ENCODE measurements at regions of chr5 and their contacts with region 1.

Region 1: DNA sequence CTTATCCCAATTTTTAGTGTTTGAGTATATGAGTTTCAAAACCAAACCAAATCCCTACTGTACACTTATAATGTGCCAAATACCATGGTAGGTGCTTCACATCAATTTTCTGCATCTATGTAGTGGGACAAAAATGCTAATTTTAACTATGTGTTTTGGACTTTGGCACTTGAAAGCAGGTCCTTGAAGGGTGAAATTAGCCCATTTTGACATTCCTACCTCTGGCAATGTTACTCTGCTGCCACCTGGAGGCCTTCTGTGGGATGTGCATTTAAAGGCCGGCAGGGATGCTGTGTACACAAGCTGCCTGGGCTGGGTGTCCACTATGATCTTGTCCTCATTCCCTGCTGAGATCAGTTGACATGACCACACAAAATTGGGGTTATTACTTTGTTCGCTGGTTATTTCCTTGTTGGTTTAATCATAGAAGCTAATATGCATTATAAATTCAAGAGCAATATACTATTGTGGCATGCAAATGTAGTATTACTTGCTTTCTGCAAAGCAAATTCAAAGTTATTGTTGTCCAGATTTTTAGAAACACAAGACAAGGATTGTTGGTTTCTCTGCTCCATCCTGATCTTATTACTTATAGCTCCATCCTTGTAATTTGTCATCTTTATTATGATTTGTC is 166.8 kb downstream of the ARHGEF28 start:
- DNase-seq: peak; percentile 59 to 85 (median 71)
- ATAC-seq: peak; percentile 83 to 85
- H3K4me3 ChIP-seq: no peak overlapping the region
- H3K27ac ChIP-seq: no peak overlapping the region
- H3K4me1 ChIP-seq: peaks cover 3% of the 10 kb centered on the region
- H3K27me3 ChIP-seq: no peaks in the 10 kb centered on the region

Region 2: DNA sequence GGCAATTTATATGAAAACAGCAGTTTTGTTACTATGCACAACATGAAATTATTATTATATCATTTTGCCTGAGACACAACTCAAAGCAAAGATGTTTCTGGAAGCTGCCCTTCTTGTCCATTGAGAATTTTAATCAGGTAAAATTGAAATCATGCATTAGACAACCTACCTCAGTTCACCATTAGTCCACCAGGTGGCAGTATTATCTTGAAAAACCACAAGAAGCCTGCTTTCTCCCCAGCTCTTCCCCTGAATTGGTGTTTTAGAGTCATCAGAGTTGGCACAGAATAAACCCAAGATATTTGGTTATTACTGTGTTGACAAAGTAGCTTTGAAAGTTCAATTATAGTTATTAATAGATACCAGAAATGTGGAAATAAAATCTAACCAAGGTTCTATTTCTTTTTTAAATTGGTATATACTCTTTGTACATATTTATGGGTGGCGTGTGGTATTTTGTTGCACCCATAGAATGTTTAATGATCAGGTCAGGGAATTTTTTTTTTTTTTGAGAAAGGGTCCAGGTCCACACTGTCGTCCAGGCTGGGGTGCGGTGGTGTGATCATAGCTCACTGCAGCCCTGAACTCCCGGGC is 201.6 kb before region 1 on chr5:
- intact Hi-C with region 1: loop called (anchors 2 kb)
- DNase-seq: no peak
- ATAC-seq: peak; percentile 62 to 81
- H3K4me3 ChIP-seq: no peak overlapping the region
- H3K27ac ChIP-seq: no peak overlapping the region
- H3K4me1 ChIP-seq: no peaks in the 10 kb centered on the region
- H3K27me3 ChIP-seq: no peaks in the 10 kb centered on the region

Measured in right cardiac atrium (tissue), 5 donors.